ENCODE measurements at regions of chr1 and their contacts with region 1.

Region 1: GRCh38 chr1:153990468-153991150 is at the start of gene RPS27:
- DNase-seq: peak; percentile 91
- H3K4me3 Mint-ChIP-seq: peak within 1 kb of the TSS; percentile 90
- H3K27ac Mint-ChIP-seq: peak within 1 kb of the TSS; percentile 90
- H3K4me1 Mint-ChIP-seq: peaks cover 49% of the 10 kb centered on the region
- H3K27me3 Mint-ChIP-seq: no peaks in the 10 kb centered on the region
- total RNA-seq, gene RPS27: 2,022 to 2,087 TPM

Region 2: GRCh38 chr1:153545067-153546055 is 445.2 kb before region 1 on chr1 and contains the start of gene S100A4:
- CTCF ChIA-PET with region 1: no interaction called
- POLR2A ChIA-PET with region 1: no interaction called
- DNase-seq: peak; percentile 97
- H3K4me3 Mint-ChIP-seq: peak within 1 kb of the TSS; percentile 96
- H3K27ac Mint-ChIP-seq: peak within 1 kb of the TSS; percentile 98
- H3K4me1 Mint-ChIP-seq: peaks cover 90% of the 10 kb centered on the region
- H3K27me3 Mint-ChIP-seq: peaks cover 3% of the 10 kb centered on the region
- total RNA-seq, gene S100A4: 1,297 to 1,322 TPM

Region 3: DNA sequence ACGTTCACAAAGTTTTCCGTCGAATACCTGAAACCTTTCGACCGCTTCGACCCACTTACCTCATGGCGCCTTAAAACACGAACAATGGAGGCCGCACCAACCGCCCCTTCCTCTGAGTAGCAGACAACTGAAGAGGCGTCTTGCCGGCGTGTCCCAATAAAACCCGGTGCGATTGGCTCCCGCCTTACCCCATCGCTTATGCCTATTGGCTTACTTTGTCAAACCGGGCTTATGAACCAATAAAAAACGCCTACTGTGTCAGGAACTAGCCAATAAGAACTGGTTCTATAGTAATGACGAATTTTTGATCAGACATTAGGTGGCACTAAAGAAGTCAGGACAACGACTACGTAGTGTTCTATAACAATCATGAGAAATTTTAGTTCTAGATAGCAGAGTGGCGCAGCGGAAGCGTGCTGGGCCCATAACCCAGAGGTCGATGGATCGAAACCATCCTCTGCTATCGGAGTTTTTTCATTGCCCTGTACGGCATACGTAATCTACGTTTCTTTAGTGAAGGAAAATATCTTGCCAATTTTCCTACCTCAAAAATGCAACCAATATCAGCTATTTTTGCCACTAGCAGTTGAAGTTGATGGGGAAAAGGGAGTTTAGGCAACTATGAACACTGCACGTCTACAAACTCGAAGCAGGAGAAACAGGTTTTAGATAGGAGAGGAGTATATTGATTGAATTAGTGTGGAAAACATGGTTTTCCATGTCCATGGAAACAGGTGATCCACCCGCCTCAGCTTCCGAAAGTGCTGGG is 319.6 kb before region 1 on chr1 and contains the start of gene ILF2:
- CTCF ChIA-PET with region 1: interaction called, 4 read pairs
- POLR2A ChIA-PET with region 1: interaction called, 10 read pairs
- DNase-seq: peak; percentile 98
- H3K4me3 Mint-ChIP-seq: no peak within 1 kb of the TSS
- H3K27ac Mint-ChIP-seq: no peak within 1 kb of the TSS
- H3K4me1 Mint-ChIP-seq: peaks cover 40% of the 10 kb centered on the region
- H3K27me3 Mint-ChIP-seq: no peaks in the 10 kb centered on the region
- total RNA-seq, gene ILF2: 166 to 169 TPM

Region 4: GRCh38 chr1:153796791-153797659 is 193.6 kb before region 1 on chr1:
- CTCF ChIA-PET with region 1: interaction called, 43 read pairs
- POLR2A ChIA-PET with region 1: interaction called, 15 read pairs
- DNase-seq: peak; percentile 86
- H3K4me3 Mint-ChIP-seq: no peak overlapping the region
- H3K27ac Mint-ChIP-seq: peak overlapping the region; percentile 44
- H3K4me1 Mint-ChIP-seq: peaks cover 23% of the 10 kb centered on the region
- H3K27me3 Mint-ChIP-seq: no peaks in the 10 kb centered on the region

Region 5: DNA sequence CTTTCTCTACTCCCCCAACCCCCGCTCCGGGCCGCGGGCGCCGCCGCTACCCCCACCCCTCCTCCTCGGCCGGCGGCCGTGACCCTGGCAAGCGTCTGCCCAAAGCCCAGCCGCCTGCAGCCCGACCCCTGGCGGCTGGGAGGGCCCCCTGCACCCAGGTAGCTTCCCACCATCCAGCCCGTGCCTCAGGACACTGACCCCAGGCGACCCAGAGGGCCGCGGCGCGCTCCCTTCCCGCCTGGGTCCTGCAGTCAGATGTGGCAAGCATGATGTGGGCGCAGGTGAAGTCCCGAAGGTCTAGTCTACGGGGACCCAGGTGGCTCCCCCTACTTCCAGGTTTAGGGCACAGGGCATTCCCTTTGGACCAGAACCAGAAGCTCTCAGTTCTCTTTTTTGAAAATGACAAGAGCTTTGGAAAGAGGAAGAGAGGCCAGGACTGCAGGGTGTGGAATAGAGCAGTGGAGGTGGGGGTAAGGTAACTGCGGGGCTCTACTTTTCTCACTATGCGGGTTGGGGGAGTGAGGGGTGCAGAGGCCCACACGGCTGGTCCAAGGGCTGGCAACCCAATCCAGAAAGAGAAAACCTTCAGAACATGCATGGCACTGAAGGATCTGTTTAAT is 43.9 kb before region 1 on chr1 and contains the start of gene DENND4B:
- CTCF ChIA-PET with region 1: interaction called, 32 read pairs
- POLR2A ChIA-PET with region 1: interaction called, 43 read pairs
- DNase-seq: peak; percentile 77
- H3K4me3 Mint-ChIP-seq: peak within 1 kb of the TSS; percentile 92
- H3K27ac Mint-ChIP-seq: peak within 1 kb of the TSS; percentile 99
- H3K4me1 Mint-ChIP-seq: peaks cover 35% of the 10 kb centered on the region
- H3K27me3 Mint-ChIP-seq: no peaks in the 10 kb centered on the region
- total RNA-seq, gene DENND4B: 159 to 166 TPM

Region 6: DNA sequence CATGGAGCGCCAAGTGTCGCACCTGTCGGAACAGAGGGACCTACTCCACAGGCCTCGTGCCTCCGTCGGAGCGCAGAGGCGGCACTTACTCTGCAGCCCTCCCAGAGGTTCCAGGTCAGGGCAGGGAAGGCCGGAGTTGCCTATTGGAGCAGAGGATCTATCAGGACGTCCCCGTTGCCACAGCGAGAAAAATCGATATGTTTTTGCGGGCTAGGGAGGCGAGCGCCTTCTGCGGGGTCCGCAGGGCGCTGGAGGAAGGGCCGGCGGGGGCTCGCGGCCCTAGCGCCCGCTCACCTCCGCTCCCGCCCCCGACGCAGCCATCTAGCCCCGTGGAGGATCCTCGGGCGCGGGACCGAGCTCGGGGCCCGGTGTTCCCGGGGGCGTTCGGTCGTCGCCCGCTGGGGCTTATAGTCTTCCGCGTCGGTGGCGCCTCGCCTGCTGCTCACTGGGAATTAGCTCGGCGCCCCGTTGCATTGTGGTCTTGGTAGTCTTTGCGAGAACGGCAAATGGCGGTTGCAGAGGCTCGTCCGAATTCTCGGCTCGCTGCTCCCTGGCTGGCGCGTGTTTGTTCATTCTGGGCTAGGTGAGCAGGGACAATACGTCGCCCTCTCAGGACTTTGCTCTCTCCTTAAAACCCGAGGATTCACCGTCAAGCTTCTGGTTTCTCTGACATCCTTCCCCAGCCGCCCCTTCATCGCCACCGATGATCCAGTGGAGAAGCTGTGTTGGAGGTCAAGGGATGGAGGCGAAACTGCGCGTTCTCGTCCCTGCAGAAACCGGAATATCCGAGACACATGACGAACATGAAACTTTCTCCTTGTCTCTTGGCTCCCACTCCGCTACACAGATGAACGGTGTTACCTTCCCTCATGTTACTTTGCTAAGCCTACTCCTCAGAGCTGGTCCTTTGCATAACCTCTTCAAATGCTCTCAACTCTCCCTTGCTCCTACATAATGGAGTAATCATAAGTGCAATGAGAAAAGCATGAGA is 13.1 kb before region 1 on chr1 and contains the start of gene JTB:
- CTCF ChIA-PET with region 1: interaction called, 43 read pairs
- POLR2A ChIA-PET with region 1: interaction called, 81 read pairs
- DNase-seq: peak; percentile 89
- H3K4me3 Mint-ChIP-seq: peak within 1 kb of the TSS; percentile 97
- H3K27ac Mint-ChIP-seq: peak within 1 kb of the TSS; percentile 89
- H3K4me1 Mint-ChIP-seq: peaks cover 49% of the 10 kb centered on the region
- H3K27me3 Mint-ChIP-seq: no peaks in the 10 kb centered on the region
- total RNA-seq, gene JTB: 120 to 127 TPM

Region 7: DNA sequence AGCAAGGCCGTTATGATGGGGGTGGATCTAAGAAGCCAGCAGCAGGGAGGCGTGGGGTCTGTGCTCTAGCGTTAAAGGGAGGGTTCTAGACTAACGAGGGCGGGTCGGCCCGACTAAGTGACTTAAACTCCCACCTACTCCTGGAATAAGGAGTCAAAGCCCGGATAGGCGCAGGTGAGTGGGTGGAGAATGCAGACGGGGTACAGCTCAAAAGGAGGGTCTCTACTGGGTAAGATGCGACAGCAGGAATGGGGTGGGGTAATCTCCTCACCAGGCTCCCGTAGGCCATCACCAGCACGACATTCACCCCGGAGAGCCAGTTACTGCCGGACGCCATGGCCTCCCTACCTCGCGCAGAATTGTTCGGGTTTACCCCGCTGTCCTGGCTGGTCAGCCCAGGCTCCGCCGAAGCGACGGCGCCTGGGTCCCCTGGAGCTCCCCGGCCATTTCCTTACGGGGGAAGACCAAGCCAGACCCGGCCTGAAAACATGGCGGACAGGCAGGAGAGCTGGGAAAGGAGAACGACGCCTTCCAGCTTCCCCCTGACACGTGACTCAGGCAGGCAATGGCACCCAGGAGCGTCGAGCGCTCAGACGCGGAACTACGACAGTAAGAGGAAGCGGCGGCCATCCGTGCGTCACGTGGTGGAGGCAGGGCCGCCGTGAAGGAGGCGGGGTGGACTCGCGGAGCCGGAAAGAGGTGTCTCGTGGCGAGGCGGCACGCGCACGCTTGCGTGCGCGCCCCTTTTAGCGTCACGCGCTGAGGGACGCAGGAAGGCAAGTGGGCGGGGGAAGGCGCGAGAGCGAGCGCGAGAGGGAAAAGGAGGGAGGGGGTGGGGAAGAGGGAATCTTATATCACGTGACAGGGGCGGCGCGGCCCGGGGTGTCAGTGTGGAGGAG is 229.7 kb after region 1 on chr1 and contains the start of gene UBAP2L:
- CTCF ChIA-PET with region 1: interaction called, 3 read pairs
- POLR2A ChIA-PET with region 1: interaction called, 24 read pairs
- DNase-seq: peak; percentile 99
- H3K4me3 Mint-ChIP-seq: peak within 1 kb of the TSS; percentile 92
- H3K27ac Mint-ChIP-seq: peak within 1 kb of the TSS; percentile 97
- H3K4me1 Mint-ChIP-seq: peaks cover 71% of the 10 kb centered on the region
- H3K27me3 Mint-ChIP-seq: no peaks in the 10 kb centered on the region
- total RNA-seq, gene UBAP2L: 155 to 157 TPM